ENCODE measurements at regions of chr6 and their contacts with region 1.

Region 1: DNA sequence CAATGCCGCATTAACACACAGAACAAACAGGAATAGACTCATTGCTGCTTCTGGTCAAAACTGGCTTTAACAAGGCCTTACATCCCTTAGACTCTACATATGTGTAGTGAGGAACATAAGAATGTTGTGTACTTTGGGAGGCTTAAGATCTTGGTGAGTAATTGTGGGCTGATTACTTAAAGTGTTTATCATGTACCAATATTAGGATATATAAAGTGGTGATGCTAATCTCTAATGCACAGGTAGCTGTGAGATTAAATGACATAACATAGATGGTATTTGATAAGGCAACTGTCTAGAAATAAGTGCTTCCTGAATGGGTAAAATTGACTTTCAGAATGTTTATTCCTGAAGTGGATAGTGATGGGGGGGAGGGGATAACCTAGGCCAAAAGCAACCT is 3.0 kb downstream of the HLA-DQB1 start:
- DNase-seq: no peak
- ATAC-seq: no peak
- H3K4me3 Mint-ChIP-seq: no peak overlapping the region
- H3K27ac Mint-ChIP-seq: no peak overlapping the region
- H3K4me1 Mint-ChIP-seq: peaks cover 31% of the 10 kb centered on the region
- H3K27me3 Mint-ChIP-seq: peaks cover 34% of the 10 kb centered on the region
- CTCF ChIP-seq: no peak

Region 2: DNA sequence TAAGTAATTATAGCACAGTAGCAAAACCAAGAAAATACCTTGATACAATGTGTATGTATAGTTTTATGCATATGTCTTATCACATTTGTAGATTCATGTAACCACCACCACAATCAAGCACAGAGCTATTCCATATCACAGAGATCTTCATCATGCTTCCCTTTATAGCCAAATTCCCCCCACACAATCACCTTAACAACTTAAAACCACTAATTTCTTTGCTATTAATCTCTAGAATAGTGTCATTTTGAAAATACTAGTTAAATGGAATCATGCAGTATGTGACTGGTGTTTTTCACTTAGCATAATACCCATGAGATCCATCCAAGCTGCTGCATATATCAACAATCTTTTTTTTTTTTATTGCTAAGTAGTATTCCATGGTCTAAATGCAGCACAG is 215.5 kb before region 1 on chr6:
- CTCF ChIA-PET with region 1: no interaction called
- POLR2A ChIA-PET with region 1: no interaction called
- intact Hi-C with region 1: no loop called
- DNase-seq: no peak
- ATAC-seq: no peak
- H3K4me3 Mint-ChIP-seq: no peak overlapping the region
- H3K27ac Mint-ChIP-seq: no peak overlapping the region
- H3K4me1 Mint-ChIP-seq: no peaks in the 10 kb centered on the region
- H3K27me3 Mint-ChIP-seq: peaks cover 30% of the 10 kb centered on the region
- CTCF ChIP-seq: no peak

Region 3: GRCh38 chr6:32763427-32763826 is 100.0 kb after region 1 on chr6 and contains the start of gene HLA-DQB2:
- CTCF ChIA-PET with region 1: no interaction called
- POLR2A ChIA-PET with region 1: no interaction called
- intact Hi-C with region 1: loop called (anchors 2 kb)
- DNase-seq: no peak
- ATAC-seq: no peak
- H3K4me3 Mint-ChIP-seq: no peak within 1 kb of the TSS
- H3K27ac Mint-ChIP-seq: no peak within 1 kb of the TSS
- H3K4me1 Mint-ChIP-seq: no peaks in the 10 kb centered on the region
- H3K27me3 Mint-ChIP-seq: peaks cover 27% of the 10 kb centered on the region
- CTCF ChIP-seq: no peak
- total RNA-seq, gene HLA-DQB2: 0.60 TPM in 1 of 2 experiments, not detected in the other

Region 4: DNA sequence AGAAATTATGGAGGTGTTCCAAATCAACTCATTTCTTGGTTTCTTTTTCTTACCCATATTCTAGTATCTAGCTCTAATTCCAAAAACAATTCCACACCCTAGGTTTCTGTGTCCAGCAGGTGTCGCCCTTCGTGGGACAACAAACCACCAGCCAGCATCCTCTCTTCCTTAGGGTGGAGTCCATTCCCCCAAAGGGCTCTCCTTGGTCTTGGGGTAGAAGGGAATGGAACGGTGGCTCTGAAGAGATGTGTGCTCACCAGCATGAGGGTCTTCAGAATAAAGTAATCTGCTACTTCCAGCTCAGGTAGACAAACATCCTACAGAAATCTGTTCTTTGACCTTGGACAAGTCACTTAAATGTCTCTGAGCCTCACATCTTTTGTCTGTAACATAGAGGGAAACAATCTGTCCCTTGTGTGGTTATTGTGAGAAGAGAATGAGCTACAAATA is 270.3 kb after region 1 on chr6:
- CTCF ChIA-PET with region 1: no interaction called
- POLR2A ChIA-PET with region 1: no interaction called
- intact Hi-C with region 1: no loop called
- DNase-seq: peak; percentile 87
- ATAC-seq: peak; percentile 70
- H3K4me3 Mint-ChIP-seq: no peak overlapping the region
- H3K27ac Mint-ChIP-seq: no peak overlapping the region
- H3K4me1 Mint-ChIP-seq: peaks cover 14% of the 10 kb centered on the region
- H3K27me3 Mint-ChIP-seq: no peaks in the 10 kb centered on the region
- CTCF ChIP-seq: peak; percentile 81